ENCODE measurements at regions of chr2 and their contacts with region 1.

Region 1: GRCh38 chr2:18178736-18179349 is 300.4 kb downstream of the KCNS3 start:
- DNase-seq: peak; percentile 40
- ATAC-seq: peak; percentile 90
- H3K4me3 ChIP-seq: no peak overlapping the region
- H3K27ac ChIP-seq: no peak overlapping the region
- H3K4me1 ChIP-seq: no peaks in the 10 kb centered on the region
- H3K27me3 ChIP-seq: peaks cover 10% of the 10 kb centered on the region
- CTCF ChIP-seq: peak; percentile 53 to 78 (median 76); a peak in 5 of 6 replicates
- POLR2A ChIP-seq: no peak
- RAD21 ChIP-seq: peak; percentile 66

Region 2: GRCh38 chr2:17719562-17720371 is 459.1 kb before region 1 on chr2:
- CTCF ChIA-PET with region 1: no interaction called
- POLR2A ChIA-PET with region 1: no interaction called
- RAD21 ChIA-PET with region 1: no interaction called
- intact Hi-C with region 1: loop called (anchors 5 kb)
- DNase-seq: peak; percentile 3
- ATAC-seq: no peak
- H3K4me3 ChIP-seq: no peak overlapping the region
- H3K27ac ChIP-seq: no peak overlapping the region
- H3K4me1 ChIP-seq: no peaks in the 10 kb centered on the region
- H3K27me3 ChIP-seq: no peaks in the 10 kb centered on the region
- CTCF ChIP-seq: peak; percentile 38 to 74 (median 70); a peak in 5 of 6 replicates
- POLR2A ChIP-seq: no peak
- RAD21 ChIP-seq: peak; percentile 61

Region 3: DNA sequence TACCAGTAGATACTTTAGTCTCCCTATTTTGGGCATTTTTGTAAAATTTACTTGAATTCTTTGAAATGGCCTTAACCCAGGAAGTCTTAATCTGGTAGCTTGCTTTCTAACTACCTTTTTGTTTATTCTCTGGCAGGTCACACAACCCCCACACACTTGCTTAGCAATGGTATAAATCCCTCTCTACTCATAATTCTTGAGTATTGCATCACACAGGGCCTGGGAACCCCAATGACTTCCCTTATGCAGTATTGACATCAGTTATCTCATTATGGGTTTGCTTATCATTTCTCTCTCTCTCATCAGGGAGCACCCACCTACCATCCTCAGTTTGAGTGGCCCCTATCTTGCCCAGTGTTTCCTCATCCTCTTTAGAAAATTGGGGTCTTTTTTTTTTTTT is 93.2 kb before region 1 on chr2:
- CTCF ChIA-PET with region 1: no interaction called
- POLR2A ChIA-PET with region 1: no interaction called
- RAD21 ChIA-PET with region 1: no interaction called
- intact Hi-C with region 1: loop called (anchors 5 kb)
- DNase-seq: no peak
- ATAC-seq: no peak
- H3K4me3 ChIP-seq: no peak overlapping the region
- H3K27ac ChIP-seq: no peak overlapping the region
- H3K4me1 ChIP-seq: no peaks in the 10 kb centered on the region
- H3K27me3 ChIP-seq: peaks cover 20% of the 10 kb centered on the region
- CTCF ChIP-seq: no peak
- POLR2A ChIP-seq: no peak
- RAD21 ChIP-seq: no peak

Measured in HCT116 (cell line).